ENCODE measurements at regions of chr14 and their contacts with region 1.

Region 1: GRCh38 chr14:90697577-90698206 is 118.5 kb downstream of the TTC7B start:
- DNase-seq: peak; percentile 38 to 53
- H3K4me3 ChIP-seq: no peak overlapping the region
- H3K27ac ChIP-seq: no peak overlapping the region
- H3K4me1 ChIP-seq: no peaks in the 10 kb centered on the region
- H3K27me3 ChIP-seq: no peaks in the 10 kb centered on the region
- CTCF ChIP-seq: peak; percentile 86

Region 2: GRCh38 chr14:90599748-90600507 is 97.8 kb before region 1 on chr14:
- CTCF ChIA-PET with region 1: no interaction called
- POLR2A ChIA-PET with region 1: no interaction called
- intact Hi-C with region 1: loop called (anchors 10 kb)
- DNase-seq: peak; percentile 12 to 62
- H3K4me3 ChIP-seq: no peak overlapping the region
- H3K27ac ChIP-seq: peak overlapping the region; percentile 57
- H3K4me1 ChIP-seq: peaks cover 8% of the 10 kb centered on the region
- H3K27me3 ChIP-seq: no peaks in the 10 kb centered on the region
- CTCF ChIP-seq: no peak; the same call in 1 of the 2 replicates